AG04449 (cell line): ENCODE measurements at regions of chr10 and their contacts with region 1.

Region 1: DNA sequence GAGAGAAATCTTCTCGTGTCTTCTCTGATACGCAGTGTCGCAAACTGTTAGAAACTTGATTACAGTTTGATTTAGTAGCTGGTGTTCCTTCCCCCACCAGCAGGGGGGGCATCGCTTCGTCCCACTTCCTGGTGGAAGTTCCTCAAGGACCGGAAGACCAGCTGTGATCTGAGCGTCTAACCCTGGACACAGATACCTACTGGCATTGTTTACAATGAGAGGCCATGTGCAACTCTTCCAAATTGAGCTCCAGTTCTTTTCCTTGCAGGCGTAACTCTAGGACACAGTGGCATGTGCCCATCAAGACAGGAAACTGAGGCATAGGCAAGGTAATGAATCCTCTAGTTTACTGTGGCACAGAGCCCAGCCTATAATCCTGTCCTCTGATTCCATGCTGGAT is 219.0 kb downstream of the CCDC3 start:
- DNase-seq: no peak
- H3K4me3 ChIP-seq: no peak overlapping the region
- CTCF ChIP-seq: peak; percentile 67

Region 2: GRCh38 chr10:12768156-12769100 is 14.1 kb before region 1 on chr10:
- CTCF ChIA-PET with region 1: interaction called, 13 read pairs
- POLR2A ChIA-PET with region 1: no interaction called
- DNase-seq: no peak
- H3K4me3 ChIP-seq: no peak overlapping the region; the same call in 1 of the 2 replicates
- CTCF ChIP-seq: no peak

Region 3: DNA sequence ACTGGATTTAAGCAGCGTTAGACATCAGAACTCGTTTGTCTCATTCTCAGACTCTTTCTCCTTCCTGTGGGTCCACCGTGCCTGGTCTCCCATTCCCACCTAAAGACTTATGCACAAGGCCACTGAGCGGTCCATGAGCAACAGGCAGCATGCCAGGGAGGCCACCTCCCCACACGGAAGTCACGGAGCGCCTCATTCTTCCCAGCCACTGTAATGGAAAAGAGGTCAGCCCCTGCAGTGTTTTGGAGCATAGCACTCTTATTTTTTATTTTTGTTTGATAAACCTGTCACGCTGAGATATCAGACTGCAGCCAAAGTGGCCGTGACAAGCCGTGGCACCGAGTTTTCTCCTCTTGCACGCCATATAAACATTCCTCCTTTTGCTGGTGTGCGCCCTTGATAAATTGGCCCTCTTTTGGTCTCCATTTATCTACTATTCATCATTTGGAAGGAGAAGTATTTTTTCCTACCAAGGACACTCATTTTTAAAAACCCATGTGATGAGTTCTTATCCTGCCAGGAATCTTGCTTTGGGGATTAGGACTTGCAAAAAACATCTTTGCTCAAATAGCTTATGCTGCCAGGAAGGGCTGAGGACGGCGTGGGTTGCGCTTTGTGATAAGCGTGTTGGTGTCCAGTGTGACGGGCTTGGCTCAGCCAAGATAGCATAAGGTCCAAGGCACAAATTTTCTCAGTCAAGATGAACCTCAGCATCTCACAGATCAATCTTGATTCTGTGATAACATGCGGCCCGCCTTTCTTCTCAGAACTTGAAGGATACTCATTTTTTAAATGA is 13.0 kb after region 1 on chr10:
- CTCF ChIA-PET with region 1: interaction called, 10 read pairs
- POLR2A ChIA-PET with region 1: no interaction called
- DNase-seq: no peak
- H3K4me3 ChIP-seq: no peak overlapping the region
- CTCF ChIP-seq: no peak

Region 4: GRCh38 chr10:13099666-13100348 is 317.3 kb after region 1 on chr10 and contains the start of gene OPTN:
- CTCF ChIA-PET with region 1: interaction called, 10 read pairs
- POLR2A ChIA-PET with region 1: no interaction called
- DNase-seq: peak; percentile 31
- H3K4me3 ChIP-seq: peak within 1 kb of the TSS; percentile 79
- CTCF ChIP-seq: peak; percentile 78